ENCODE measurements at regions of chr17 and their contacts with region 1.

Region 1: GRCh38 chr17:76467366-76467765 is at the start of gene AANAT:
- DNase-seq: no peak
- H3K4me3 Mint-ChIP-seq: no peak within 1 kb of the TSS
- H3K27ac Mint-ChIP-seq: no peak within 1 kb of the TSS
- H3K4me1 Mint-ChIP-seq: peaks cover 4% of the 10 kb centered on the region
- H3K27me3 Mint-ChIP-seq: peaks cover 5% of the 10 kb centered on the region
- total RNA-seq, gene AANAT: not detected

Region 2: DNA sequence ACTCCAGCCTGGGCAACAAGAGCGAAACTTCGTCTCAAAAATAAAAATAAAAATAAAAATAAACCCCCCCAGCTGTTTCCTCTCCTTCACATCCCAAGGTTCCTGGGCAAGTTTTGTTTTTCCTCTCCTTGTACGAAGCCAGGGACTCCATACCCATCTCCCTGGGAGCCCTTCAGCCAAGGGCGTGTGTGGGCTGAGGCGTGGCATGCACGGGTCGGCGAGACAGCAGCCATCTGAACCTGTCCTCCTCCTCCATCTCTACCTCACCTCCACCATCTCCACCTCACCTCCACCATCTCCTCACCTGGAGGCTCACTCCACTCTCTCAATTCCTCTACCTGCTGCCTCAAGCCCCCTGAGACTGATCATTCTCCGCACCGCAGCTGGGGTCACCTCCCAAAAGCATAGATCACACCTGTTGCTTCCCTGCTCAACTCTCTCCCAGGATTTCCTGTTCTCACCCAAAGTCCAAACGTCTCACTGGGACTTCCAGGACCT is 16.9 kb after region 1 on chr17:
- CTCF ChIA-PET with region 1: no interaction called
- POLR2A ChIA-PET with region 1: no interaction called
- DNase-seq: no peak
- H3K4me3 Mint-ChIP-seq: no peak overlapping the region
- H3K27ac Mint-ChIP-seq: no peak overlapping the region
- H3K4me1 Mint-ChIP-seq: peaks cover 7% of the 10 kb centered on the region
- H3K27me3 Mint-ChIP-seq: no peaks in the 10 kb centered on the region

Region 3: DNA sequence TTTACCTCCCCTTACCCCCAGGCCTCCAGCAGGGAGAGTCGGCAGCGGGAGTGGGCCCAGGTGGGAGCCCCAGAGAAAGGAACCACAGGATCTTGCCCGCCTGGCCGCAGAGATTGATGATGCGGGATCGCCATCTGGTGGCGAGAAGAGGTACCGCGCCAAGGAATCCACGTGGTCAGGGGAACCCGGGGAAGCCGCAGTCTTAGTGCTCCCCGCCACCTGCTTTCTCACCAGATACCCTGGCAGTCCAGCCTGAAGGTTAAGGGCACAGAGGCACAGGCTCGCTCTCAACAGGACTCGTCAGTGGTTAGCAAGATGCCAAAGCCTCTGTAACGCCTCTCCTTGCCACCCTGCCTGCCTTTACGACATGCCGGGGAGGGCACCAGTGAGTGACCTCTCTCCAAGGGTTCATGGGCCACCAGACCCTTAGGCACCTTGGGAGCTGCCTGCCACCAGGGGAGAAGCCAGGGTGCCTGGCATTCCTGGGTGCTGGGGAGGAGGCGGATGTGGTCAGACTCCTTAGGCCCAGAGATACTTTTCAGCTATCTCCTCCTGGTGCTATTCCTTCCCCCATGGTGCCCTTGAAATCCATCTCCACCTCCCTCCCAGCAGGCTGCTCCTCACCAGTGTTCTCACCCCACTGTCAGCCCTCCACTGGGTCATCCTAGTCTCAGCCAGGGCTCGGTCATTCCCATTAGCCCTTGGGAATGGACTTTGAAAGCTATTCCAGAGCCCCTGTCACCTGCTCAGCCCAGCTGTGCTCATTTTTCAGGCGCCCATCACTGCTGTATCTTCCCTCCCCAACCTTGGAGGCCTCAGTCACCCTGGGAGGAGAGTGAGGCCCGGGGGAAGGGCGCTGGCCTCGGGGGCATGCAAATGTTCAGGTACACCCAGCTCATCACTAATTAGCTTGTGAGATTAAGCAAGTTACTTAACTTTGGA is 39.3 kb after region 1 on chr17:
- CTCF ChIA-PET with region 1: interaction called, 28 read pairs
- POLR2A ChIA-PET with region 1: interaction called, 4 read pairs
- DNase-seq: peak; percentile 90
- H3K4me3 Mint-ChIP-seq: no peak overlapping the region
- H3K27ac Mint-ChIP-seq: no peak overlapping the region
- H3K4me1 Mint-ChIP-seq: peaks cover 40% of the 10 kb centered on the region
- H3K27me3 Mint-ChIP-seq: peaks cover 8% of the 10 kb centered on the region

Measured in activated CD4-positive, alpha-beta memory T cell treated with anti-CD3 and anti-CD28 coated beads, Interleukin-2, amount 10 ng/mL, durations not matched to agents 7 days and 5 days (primary cell).